Activated CD8-positive, alpha-beta T cell treated with anti-CD3 and anti-CD28 coated beads for 36 hours (primary cell): ENCODE measurements at regions of chr17 and their contacts with region 1.

Region 1: GRCh38 chr17:49434821-49435670 is 20.4 kb upstream of the PHB1 start:
- DNase-seq: peak; percentile 64
- ATAC-seq: peak; percentile 53
- H3K4me3 Mint-ChIP-seq: no peak overlapping the region
- H3K27ac Mint-ChIP-seq: no peak overlapping the region
- H3K4me1 Mint-ChIP-seq: no peaks in the 10 kb centered on the region
- H3K27me3 Mint-ChIP-seq: peaks cover 22% of the 10 kb centered on the region
- CTCF ChIP-seq: peak; percentile 95

Region 2: DNA sequence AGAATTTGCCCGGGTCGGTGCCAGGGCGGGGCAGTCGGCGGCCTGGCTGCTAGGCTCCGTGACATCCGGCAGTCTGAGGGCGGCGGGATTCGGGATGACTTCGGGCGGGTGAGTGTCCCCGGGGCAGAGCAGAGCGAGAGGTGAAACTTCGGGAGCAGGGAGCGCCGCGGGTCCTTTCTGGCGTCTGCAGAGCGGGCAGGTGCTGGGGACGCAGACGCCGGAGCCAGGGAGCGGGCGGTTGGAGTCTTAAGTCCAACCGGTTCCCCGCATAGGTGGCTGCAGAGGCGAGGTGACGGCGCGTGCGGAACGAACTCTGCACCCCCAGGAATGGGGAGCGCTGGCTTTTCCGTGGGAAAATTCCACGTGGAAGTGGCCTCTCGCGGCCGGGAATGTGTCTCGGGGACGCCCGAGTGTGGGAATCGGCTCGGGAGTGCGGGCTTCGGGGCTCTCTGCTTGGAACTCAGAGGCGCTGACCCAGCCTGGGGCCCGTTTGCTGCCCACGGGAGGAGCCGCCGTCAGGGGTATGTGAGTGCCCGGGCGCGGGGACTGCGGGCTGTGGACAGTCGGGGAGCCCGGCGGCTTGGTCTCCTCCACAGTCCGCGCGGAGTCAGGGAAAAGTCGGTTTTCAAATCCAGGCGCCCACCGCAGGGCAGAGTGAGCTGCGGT is 302.2 kb before region 1 on chr17 and contains the start of gene B4GALNT2:
- CTCF ChIA-PET with region 1: no interaction called
- POLR2A ChIA-PET with region 1: no interaction called
- intact Hi-C with region 1: no loop called
- DNase-seq: peak; percentile 27
- ATAC-seq: peak; percentile 55
- H3K4me3 Mint-ChIP-seq: peak within 1 kb of the TSS; percentile 9
- H3K27ac Mint-ChIP-seq: no peak within 1 kb of the TSS
- H3K4me1 Mint-ChIP-seq: peaks cover 4% of the 10 kb centered on the region
- H3K27me3 Mint-ChIP-seq: peaks cover 48% of the 10 kb centered on the region
- CTCF ChIP-seq: no peak
- total RNA-seq, gene B4GALNT2: not detected

Region 3: GRCh38 chr17:49425004-49425286 is 10.1 kb before region 1 on chr17:
- CTCF ChIA-PET with region 1: interaction called, 20 read pairs
- POLR2A ChIA-PET with region 1: no interaction called
- intact Hi-C with region 1: no loop called
- DNase-seq: no peak
- ATAC-seq: no peak
- H3K4me3 Mint-ChIP-seq: no peak overlapping the region
- H3K27ac Mint-ChIP-seq: no peak overlapping the region
- H3K4me1 Mint-ChIP-seq: no peaks in the 10 kb centered on the region
- H3K27me3 Mint-ChIP-seq: peaks cover 2% of the 10 kb centered on the region
- CTCF ChIP-seq: no peak